Calu3 (cell line): ENCODE measurements at regions of chrX and their contacts with region 1.

Region 1: DNA sequence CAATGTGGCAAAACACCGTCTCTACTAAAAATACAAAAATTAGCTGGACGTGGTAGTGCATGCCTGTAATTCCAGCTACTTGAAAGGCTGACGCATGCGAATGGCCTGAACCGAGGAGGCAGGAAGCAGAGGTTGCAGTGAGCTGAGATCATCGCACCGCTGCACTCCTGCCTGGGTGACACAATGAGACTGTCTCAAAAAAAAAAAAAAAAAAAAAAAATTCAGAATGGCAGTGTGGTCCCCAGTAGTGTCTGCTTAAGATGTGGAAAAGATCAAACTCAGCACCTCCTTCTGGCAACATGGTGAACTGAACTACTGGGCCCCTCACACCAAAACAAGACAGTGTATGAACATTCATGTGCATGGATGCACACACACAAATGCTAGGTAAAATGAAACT is 32.2 kb downstream of the SMS start:
- DNase-seq: peak; percentile 41
- H3K4me3 Mint-ChIP-seq: no peak overlapping the region
- H3K27ac Mint-ChIP-seq: peak overlapping the region; percentile 91
- H3K4me1 Mint-ChIP-seq: peaks cover 53% of the 10 kb centered on the region
- H3K27me3 Mint-ChIP-seq: no peaks in the 10 kb centered on the region
- CTCF ChIP-seq: no peak

Region 2: GRCh38 chrX:21745756-21746155 is 227.0 kb before region 1 on chrX:
- CTCF ChIA-PET with region 1: interaction called, 3 read pairs
- intact Hi-C with region 1: loop called (anchors 10 kb)
- DNase-seq: peak; percentile 53
- H3K4me3 Mint-ChIP-seq: no peak overlapping the region
- H3K27ac Mint-ChIP-seq: no peak overlapping the region
- H3K4me1 Mint-ChIP-seq: peaks cover 32% of the 10 kb centered on the region
- H3K27me3 Mint-ChIP-seq: no peaks in the 10 kb centered on the region
- CTCF ChIP-seq: peak; percentile 50

Region 3: DNA sequence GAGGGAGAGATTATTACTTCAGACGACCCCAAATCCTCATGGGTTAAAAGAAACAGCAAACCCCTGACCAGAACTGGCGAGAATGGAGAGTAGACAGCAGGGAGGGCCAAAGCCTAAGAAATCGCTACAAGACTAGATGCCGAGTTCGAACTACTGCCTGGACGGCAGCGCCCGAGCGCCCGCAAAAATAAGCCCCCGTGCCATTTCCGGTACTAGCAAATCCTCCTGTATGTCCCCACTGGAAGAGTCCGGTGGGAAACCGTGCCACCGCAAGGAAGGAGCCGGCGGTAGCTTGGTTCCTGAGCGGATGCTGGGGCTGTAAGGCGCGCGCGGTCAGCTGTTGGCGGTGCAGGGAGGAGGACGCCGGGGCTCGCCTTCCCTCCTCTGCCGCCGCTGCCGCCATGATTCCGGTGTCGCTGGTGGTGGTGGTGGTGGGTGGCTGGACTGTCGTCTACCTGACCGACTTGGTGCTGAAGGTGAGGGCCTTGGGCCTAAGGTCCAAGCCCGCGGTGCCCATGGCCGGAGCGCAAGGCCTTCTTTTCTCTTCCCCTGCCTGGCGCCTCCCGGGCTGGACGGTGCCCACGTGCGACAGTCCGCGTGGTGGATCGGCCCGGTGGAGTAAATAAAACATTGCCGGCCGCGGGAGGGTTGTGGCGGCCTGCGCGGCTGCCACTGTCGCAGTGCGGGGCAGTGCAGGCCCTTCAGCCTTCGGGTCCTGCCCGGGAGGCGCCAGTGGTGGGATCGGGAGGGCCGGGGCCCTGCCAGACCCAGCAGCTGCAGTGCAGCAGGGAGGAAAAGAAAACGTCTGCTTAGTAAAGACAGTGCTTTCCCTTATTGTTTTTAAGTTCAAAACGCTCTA is 133.2 kb before region 1 on chrX and contains the start of gene MBTPS2:
- CTCF ChIA-PET with region 1: interaction called, 7 read pairs
- intact Hi-C with region 1: loop called (anchors 5 kb)
- DNase-seq: peak; percentile 84
- H3K4me3 Mint-ChIP-seq: peak within 1 kb of the TSS; percentile 86
- H3K27ac Mint-ChIP-seq: peak within 1 kb of the TSS; percentile 83
- H3K4me1 Mint-ChIP-seq: no peaks in the 10 kb centered on the region
- H3K27me3 Mint-ChIP-seq: no peaks in the 10 kb centered on the region
- CTCF ChIP-seq: no peak
- total RNA-seq, gene MBTPS2: 27.6 and 29.7 TPM in 2 replicates

Region 4: DNA sequence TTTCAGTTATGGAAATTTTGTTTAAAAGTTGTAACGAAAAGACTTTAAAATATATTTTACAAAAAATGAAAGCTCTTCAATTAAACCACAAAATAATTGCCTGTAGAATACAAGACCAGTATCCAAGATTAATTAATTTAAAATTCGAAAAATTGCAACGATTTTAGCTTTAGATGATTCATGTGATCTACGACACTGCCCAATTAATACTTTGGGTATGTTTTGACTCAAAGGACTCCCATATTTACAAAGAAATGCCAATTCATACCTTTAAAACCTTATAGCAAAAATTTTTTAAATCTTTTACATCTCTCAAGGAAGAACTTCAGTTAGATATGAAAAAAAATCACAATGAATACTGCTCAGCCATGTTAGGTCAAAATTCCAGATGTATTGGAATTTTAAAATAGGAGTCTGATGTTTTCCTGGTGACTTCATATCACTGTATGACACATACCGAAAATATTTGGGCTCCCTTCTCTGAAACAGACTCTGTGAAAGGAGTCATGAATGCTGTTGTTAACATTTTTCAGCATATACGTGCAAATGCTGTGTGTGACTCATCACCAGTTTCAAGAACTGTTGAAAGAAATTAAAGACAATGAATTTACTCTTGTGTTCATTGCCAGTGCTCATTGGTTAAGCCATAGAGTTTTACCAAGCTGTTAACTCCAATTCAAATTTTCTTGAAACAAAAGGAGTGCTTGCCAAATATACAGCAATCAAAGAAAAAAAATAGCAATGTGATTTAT is 46.0 kb before region 1 on chrX:
- CTCF ChIA-PET with region 1: no interaction called
- intact Hi-C with region 1: loop called (anchors 5 kb)
- DNase-seq: peak; percentile 22
- H3K4me3 Mint-ChIP-seq: peak overlapping the region; percentile 24
- H3K27ac Mint-ChIP-seq: peak overlapping the region; percentile 86
- H3K4me1 Mint-ChIP-seq: peaks cover 26% of the 10 kb centered on the region
- H3K27me3 Mint-ChIP-seq: no peaks in the 10 kb centered on the region
- CTCF ChIP-seq: no peak

Region 5: DNA sequence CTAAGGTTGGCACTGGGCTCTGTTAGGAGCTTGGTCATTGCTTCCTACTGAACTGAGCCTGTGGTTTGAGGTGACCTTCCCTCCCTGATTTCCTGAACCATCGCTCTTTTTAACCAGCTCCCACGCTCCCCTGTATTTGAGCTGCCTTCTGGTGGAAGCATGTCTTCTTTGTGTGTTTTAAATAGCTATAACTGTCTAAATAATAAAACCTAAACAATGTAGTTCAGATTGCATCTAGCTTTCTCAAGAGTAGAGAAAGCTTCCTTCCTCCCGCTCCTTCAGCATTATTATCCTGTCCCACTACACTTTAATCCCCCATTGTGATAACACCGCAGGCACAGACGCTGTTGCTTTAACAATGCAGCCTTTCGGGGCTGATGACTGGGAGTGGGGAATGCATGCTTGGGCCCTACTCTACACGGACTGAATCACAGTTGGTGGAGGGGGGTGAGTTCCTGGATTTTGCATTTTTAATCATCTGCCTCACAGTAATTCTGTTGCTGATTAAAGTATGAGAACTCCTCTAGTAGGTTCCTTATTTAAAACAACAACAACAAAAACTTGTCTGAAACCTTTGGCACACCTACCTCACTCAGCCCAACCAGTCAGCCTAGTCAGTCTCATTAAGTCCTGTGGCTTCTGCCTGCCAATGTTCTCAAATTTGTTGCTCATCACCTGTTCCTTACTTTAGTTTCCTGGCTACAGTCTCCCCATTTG is 25.6 kb before region 1 on chrX:
- CTCF ChIA-PET with region 1: interaction called, 4 read pairs
- intact Hi-C with region 1: loop called (anchors 2 kb)
- DNase-seq: no peak
- H3K4me3 Mint-ChIP-seq: peak overlapping the region; percentile 61
- H3K27ac Mint-ChIP-seq: peak overlapping the region; percentile 81
- H3K4me1 Mint-ChIP-seq: peaks cover 45% of the 10 kb centered on the region
- H3K27me3 Mint-ChIP-seq: no peaks in the 10 kb centered on the region
- CTCF ChIP-seq: no peak

Region 6: DNA sequence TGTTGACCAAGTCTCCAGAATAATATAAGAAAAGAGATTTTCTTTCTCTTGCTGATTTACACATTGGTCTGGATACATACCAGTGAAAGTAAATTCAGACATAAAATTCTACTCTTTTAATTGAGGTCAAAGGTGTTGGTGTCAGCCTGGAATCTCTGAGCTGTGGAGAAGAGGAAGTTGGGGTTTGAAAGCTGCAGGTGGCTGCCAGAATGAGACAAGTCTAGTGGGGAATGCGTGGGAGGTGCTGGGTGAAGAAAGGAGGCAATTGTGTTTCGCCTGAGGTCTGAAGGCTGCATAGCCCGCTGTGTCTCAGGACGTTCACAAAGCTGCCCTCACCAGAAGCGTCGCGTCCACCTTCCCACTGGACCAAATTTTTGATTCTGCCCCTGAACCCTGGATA is 90.6 kb after region 1 on chrX:
- CTCF ChIA-PET with region 1: no interaction called
- intact Hi-C with region 1: no loop called
- DNase-seq: peak; percentile 20
- H3K4me3 Mint-ChIP-seq: no peak overlapping the region
- H3K27ac Mint-ChIP-seq: no peak overlapping the region
- H3K4me1 Mint-ChIP-seq: peaks cover 33% of the 10 kb centered on the region
- H3K27me3 Mint-ChIP-seq: no peaks in the 10 kb centered on the region
- CTCF ChIP-seq: no peak